ENCODE measurements at regions of chr9 and their contacts with region 1.

Region 1: DNA sequence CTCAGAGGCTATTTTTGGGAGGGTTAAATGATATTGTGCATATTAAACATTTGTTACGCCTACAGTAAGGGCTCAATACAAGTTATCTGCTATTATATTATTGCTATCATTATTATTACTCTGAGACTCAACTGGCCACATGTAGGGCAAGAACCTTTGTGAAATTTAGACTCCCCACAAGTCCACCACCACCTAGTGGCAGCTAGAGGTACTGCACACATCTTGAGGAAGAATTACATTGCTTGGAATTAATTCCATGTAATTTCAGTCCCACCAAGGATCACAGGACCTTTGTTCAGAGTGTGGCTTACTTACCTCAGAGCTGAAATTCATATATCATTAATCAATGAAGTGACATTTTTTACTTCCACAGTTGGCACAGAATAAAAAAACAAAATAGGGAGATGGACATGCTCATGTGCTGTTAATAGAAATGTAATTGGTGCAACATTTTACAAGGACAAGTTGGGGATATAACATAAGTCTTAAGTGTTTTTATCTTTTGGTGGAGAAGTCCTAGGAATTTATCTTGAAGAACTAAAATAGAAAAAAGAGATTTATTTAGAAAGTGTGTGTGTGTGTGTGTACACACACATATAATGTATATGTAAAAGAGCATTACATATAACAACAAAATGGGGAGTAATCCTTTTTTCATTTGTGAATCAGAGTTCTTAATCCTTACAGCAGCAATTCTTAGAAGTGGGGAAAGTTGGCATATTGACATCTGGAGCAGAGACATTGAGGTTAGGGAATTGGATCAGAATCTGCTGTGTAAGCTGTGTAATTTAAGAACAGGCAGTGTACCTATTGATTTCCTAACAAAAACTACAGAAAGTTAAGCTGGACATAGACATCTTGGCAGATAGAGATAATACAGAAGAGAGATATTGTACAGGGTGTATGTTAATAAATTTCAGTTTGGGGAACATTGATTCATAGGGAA is 11.2 kb downstream of the MSANTD3 start:
- DNase-seq: peak; percentile 70 to 81
- ATAC-seq: peak; percentile 60 to 80; a peak in 5 of 6 replicates
- H3K4me3 ChIP-seq: no peak overlapping the region
- H3K27ac ChIP-seq: no peak overlapping the region
- H3K4me1 ChIP-seq: 0 out of 3 replicates have a peak, but pooled peaks cover 4% of the 10 kb centered on the region
- CTCF ChIP-seq: peak; percentile 82
- EP300 ChIP-seq: no peak
- POLR2A ChIP-seq: no peak
- RAD21 ChIP-seq: peak; percentile 62 to 67

Region 2: DNA sequence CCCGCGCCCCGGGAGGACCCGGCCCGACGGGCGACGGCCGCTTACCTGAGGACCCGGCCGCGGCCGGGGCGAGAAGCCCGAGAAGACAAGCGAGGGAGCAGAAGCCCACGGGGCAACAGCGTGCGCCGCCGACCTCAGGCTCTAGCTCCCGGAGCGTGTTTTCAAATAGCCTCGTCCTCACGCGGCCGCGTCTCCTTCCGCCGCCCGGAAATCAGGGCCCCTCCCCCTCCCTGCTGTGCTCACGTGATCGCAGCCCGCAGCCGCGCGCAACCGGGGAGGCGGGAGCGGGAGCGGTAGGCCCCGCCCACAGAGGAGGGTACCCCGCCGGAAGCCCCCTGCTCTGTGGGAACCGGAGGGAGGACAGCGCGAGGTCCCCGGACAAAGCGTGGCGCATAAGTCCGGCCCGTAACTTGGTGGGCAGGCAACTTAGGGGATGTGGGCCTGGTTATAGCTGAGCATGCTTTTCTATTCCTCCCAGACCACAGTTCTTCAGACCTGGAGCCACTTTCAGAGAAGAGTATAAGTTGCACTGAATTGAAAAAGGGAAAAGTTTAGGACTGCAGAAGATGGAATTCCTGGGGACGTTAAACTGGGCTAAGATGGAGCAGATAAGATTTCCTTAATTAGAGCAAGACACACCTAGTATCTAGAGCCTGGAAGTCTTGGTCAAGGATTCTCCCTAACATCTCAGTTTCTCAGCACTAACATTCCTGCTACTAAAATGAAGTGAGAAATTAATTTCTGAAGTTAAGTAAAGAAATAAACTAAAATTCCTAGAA is 85.2 kb before region 1 on chr9 and contains the start of gene TEX10:
- CTCF ChIA-PET with region 1: interaction called, 12 read pairs
- POLR2A ChIA-PET with region 1: no interaction called
- DNase-seq: peak; percentile 86 to 87
- ATAC-seq: peak; percentile 88 to 91
- H3K4me3 ChIP-seq: peak within 1 kb of the TSS; percentile 99
- H3K27ac ChIP-seq: peak within 1 kb of the TSS; percentile 98 to 99
- H3K4me1 ChIP-seq: peaks cover 26% of the 10 kb centered on the region; the same call in 2 of the 3 replicates
- CTCF ChIP-seq: no peak
- EP300 ChIP-seq: no peak
- POLR2A ChIP-seq: peak; percentile 86; the same call in 1 of the 2 replicates
- RAD21 ChIP-seq: 0 out of 5 replicates have a peak, but pooled peaks of 1 of the 2 experiments have one; percentile 14
- polyA plus RNA-seq, gene TEX10: 31.2 and 37.0 TPM in 2 replicates

Region 3: GRCh38 chr9:100449420-100449819 is 11.3 kb after region 1 on chr9:
- CTCF ChIA-PET with region 1: interaction called, 11 read pairs
- POLR2A ChIA-PET with region 1: no interaction called
- DNase-seq: no peak
- ATAC-seq: no peak
- H3K4me3 ChIP-seq: no peak overlapping the region
- H3K27ac ChIP-seq: no peak overlapping the region
- H3K4me1 ChIP-seq: 0 out of 3 replicates have a peak, but pooled peaks cover under 1% of the 10 kb centered on the region
- CTCF ChIP-seq: no peak
- EP300 ChIP-seq: no peak
- POLR2A ChIP-seq: no peak
- RAD21 ChIP-seq: no peak

Region 4: GRCh38 chr9:100511205-100511604 is 73.1 kb after region 1 on chr9:
- CTCF ChIA-PET with region 1: no interaction called
- POLR2A ChIA-PET with region 1: no interaction called
- DNase-seq: no peak
- ATAC-seq: no peak
- H3K4me3 ChIP-seq: no peak overlapping the region
- H3K27ac ChIP-seq: no peak overlapping the region
- H3K4me1 ChIP-seq: peaks cover 10% of the 10 kb centered on the region
- CTCF ChIP-seq: no peak
- EP300 ChIP-seq: no peak
- POLR2A ChIP-seq: no peak
- RAD21 ChIP-seq: no peak

Measured in A549 (cell line).